Naive thymus-derived CD4-positive, alpha-beta T cell (primary cell): ENCODE measurements at regions of chr11 and their contacts with region 1.

Region 1: DNA sequence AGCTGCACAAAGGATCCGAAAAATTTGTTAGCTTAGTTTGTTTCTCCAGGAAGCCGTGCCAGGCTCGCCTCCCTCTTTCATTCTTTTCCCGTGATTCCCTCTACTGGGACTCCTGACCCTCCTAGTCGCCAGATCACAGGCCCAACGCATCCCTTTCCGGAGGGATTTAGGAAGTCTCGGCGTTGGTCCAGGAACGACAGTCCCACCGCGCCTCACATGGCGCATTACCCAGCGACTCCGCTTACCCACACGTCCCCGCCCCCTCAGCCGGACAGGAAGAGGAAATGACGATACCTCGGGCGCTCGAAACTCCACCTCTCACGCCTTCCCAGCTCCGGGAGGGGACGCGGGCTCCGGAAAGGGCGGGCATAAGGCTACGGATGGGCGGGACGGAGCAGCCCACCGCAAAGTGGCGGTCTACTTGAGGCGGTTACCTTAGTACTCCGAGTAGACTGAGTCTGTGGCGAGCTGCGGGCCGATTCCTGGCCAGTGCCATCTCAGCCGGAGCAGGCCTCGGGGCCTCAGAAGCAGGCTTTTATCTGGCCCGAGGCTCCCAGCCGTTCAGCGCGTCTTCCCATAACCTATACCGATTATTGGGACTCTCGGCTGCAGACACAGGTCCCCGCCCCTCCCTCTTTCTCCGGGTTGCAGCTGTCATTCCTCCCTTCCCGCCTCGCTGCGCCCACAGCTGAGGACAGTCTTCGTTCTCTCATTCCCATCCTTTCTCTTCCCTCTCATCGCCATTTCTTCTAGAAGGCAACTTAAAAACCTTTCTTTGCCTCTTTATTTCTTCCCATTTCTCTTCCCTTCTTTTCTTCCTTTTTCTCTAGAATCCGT is at the start of gene CCDC15:
- DNase-seq: peak; percentile 78 to 94 (median 92)
- ATAC-seq: peak; percentile 99
- H3K4me3 ChIP-seq: peak within 1 kb of the TSS; percentile 72
- H3K4me3 Mint-ChIP-seq: no peak within 1 kb of the TSS
- H3K27ac ChIP-seq: peak within 1 kb of the TSS; percentile 85
- H3K27ac Mint-ChIP-seq: no peak within 1 kb of the TSS
- H3K4me1 ChIP-seq: peaks cover 27 to 42% of the 10 kb centered on the region in 2 donors
- H3K4me1 Mint-ChIP-seq: peaks cover 0 to 7% (median 0%) of the 10 kb centered on the region in 7 donors
- H3K27me3 ChIP-seq: no peaks in the 10 kb centered on the region
- H3K27me3 Mint-ChIP-seq: no peaks in the 10 kb centered on the region
- total RNA-seq, gene CCDC15: 1.6 to 4.7 (median 2.7) TPM

Region 2: GRCh38 chr11:124622531-124623451 is 331.2 kb before region 1 on chr11 and contains the start of gene TBRG1:
- CTCF ChIA-PET with region 1: no interaction called
- POLR2A ChIA-PET with region 1: interaction called, 6 read pairs
- intact Hi-C with region 1: loop called (anchors 1 to 5 kb)
- DNase-seq: peak; percentile 58 to 87 (median 81)
- ATAC-seq: peak; percentile 96
- H3K4me3 ChIP-seq: peak within 1 kb of the TSS; percentile 75
- H3K4me3 Mint-ChIP-seq: peak within 1 kb of the TSS; percentile 89 to 100 (median 98)
- H3K27ac ChIP-seq: peak within 1 kb of the TSS; percentile 91
- H3K27ac Mint-ChIP-seq: peak within 1 kb of the TSS; percentile 91 to 100 (median 98)
- H3K4me1 ChIP-seq: peaks cover 7 to 12% of the 10 kb centered on the region in 2 donors
- H3K4me1 Mint-ChIP-seq: peaks cover 21 to 52% (median 46%) of the 10 kb centered on the region in 7 donors
- H3K27me3 ChIP-seq: no peaks in the 10 kb centered on the region
- H3K27me3 Mint-ChIP-seq: peaks cover 0 to 23% (median 7%) of the 10 kb centered on the region in 5 donors
- total RNA-seq, gene TBRG1: 35.5 to 78.6 (median 63.9) TPM

Region 3: GRCh38 chr11:124758317-124759203 is 195.4 kb before region 1 on chr11:
- CTCF ChIA-PET with region 1: no interaction called
- POLR2A ChIA-PET with region 1: interaction called, 3 read pairs
- intact Hi-C with region 1: loop called (anchors 2 to 5 kb)
- DNase-seq: peak in 8 of 9 donors; percentile 61 to 73 (median 66)
- ATAC-seq: peak; percentile 78
- H3K4me3 ChIP-seq: peak overlapping the region; percentile 27
- H3K4me3 Mint-ChIP-seq: peak overlapping the region; percentile 52 to 98 (median 76)
- H3K27ac ChIP-seq: no peak overlapping the region
- H3K27ac Mint-ChIP-seq: peak overlapping the region in 2 of 9 donors; percentile 38 to 41
- H3K4me1 ChIP-seq: peaks cover 8 to 31% of the 10 kb centered on the region in 2 donors
- H3K4me1 Mint-ChIP-seq: peaks cover 6 to 40% (median 24%) of the 10 kb centered on the region in 7 donors
- H3K27me3 ChIP-seq: peaks cover 7 to 16% of the 10 kb centered on the region in 2 donors
- H3K27me3 Mint-ChIP-seq: peaks cover 36 to 60% (median 53%) of the 10 kb centered on the region in 5 donors

Region 4: GRCh38 chr11:124859171-124859570 is 94.8 kb before region 1 on chr11:
- CTCF ChIA-PET with region 1: no interaction called
- POLR2A ChIA-PET with region 1: no interaction called
- intact Hi-C with region 1: no loop called
- DNase-seq: no peak
- ATAC-seq: no peak
- H3K4me3 ChIP-seq: no peak overlapping the region
- H3K4me3 Mint-ChIP-seq: no peak overlapping the region
- H3K27ac ChIP-seq: no peak overlapping the region
- H3K27ac Mint-ChIP-seq: no peak overlapping the region
- H3K4me1 ChIP-seq: peaks cover 0 to 4% of the 10 kb centered on the region in 2 donors
- H3K4me1 Mint-ChIP-seq: peaks cover 0 to 15% (median 12%) of the 10 kb centered on the region in 7 donors
- H3K27me3 ChIP-seq: peaks cover 0 to 15% of the 10 kb centered on the region in 2 donors
- H3K27me3 Mint-ChIP-seq: peaks cover 44 to 48% (median 46%) of the 10 kb centered on the region in 5 donors

Region 5: DNA sequence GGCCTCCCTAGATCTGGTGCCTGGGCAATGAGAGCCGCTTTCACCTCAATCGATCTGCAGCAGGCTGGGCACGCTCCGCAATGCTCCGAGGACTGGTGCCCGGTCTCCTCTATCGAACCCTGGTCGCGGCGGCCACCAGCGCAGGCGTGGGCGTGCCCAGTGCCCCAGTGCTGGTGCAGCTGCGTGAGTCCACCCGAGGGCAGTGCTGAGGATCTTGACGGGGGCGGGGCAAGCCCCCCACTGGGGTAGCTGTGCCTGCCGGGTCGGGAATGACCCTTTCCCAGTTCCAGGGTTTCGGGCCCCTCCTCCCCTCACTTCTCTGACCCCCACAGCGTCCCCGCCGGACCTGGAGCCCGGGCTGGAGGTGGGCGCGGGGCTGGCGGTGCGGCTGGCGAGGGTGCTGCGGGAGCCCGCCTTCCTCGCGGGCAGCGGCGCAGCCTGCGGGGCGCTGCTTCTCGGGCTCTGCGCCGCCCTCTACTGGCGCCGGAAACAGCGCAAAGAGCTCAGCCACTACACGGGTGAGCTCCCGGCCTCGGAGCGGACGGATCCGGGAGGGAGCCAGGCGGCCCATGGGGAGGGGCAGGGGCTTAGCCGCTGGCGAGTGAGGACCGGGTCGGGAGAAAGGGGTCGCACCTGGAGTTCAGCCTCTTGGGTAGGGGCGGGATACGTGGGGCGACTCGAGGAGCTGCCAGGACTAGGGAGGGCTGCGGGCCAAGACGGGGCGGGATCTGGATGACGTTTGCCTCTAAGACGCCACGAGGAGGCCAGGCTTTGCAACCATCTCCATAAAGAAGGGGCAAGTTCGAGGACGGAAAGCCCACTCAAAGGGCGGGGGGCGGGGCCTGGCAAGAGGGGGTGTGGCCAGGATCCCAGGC is 77.8 kb before region 1 on chr11:
- CTCF ChIA-PET with region 1: interaction called, 19 read pairs
- POLR2A ChIA-PET with region 1: interaction called, 21 read pairs
- intact Hi-C with region 1: loop called (anchors 1 kb)
- DNase-seq: peak; percentile 71 to 84 (median 81)
- ATAC-seq: peak; percentile 94
- H3K4me3 ChIP-seq: peak overlapping the region; percentile 98
- H3K4me3 Mint-ChIP-seq: peak overlapping the region; percentile 85 to 94 (median 90)
- H3K27ac ChIP-seq: peak overlapping the region; percentile 79
- H3K27ac Mint-ChIP-seq: peak overlapping the region; percentile 77 to 95 (median 92)
- H3K4me1 ChIP-seq: peaks cover 7 to 9% of the 10 kb centered on the region in 2 donors
- H3K4me1 Mint-ChIP-seq: peaks cover 11 to 34% (median 24%) of the 10 kb centered on the region in 7 donors
- H3K27me3 ChIP-seq: peaks cover 0 to 3% of the 10 kb centered on the region in 2 donors
- H3K27me3 Mint-ChIP-seq: peaks cover 18 to 49% (median 34%) of the 10 kb centered on the region in 5 donors

Region 6: GRCh38 chr11:124943254-124943616 is 10.7 kb before region 1 on chr11:
- CTCF ChIA-PET with region 1: interaction called, 4 read pairs
- POLR2A ChIA-PET with region 1: interaction called, 15 read pairs
- intact Hi-C with region 1: loop called in 1 of 2 experiments (anchors 1 kb)
- DNase-seq: no peak
- ATAC-seq: no peak
- H3K4me3 ChIP-seq: no peak overlapping the region
- H3K4me3 Mint-ChIP-seq: peak overlapping the region in 3 of 10 donors; percentile 3 to 59 (median 40)
- H3K27ac ChIP-seq: no peak overlapping the region
- H3K27ac Mint-ChIP-seq: peak overlapping the region in 7 of 9 donors; percentile 3 to 95 (median 59)
- H3K4me1 ChIP-seq: peaks cover 6 to 20% of the 10 kb centered on the region in 2 donors
- H3K4me1 Mint-ChIP-seq: peaks cover 4 to 36% (median 30%) of the 10 kb centered on the region in 7 donors
- H3K27me3 ChIP-seq: no peaks in the 10 kb centered on the region
- H3K27me3 Mint-ChIP-seq: no peaks in the 10 kb centered on the region

Region 7: DNA sequence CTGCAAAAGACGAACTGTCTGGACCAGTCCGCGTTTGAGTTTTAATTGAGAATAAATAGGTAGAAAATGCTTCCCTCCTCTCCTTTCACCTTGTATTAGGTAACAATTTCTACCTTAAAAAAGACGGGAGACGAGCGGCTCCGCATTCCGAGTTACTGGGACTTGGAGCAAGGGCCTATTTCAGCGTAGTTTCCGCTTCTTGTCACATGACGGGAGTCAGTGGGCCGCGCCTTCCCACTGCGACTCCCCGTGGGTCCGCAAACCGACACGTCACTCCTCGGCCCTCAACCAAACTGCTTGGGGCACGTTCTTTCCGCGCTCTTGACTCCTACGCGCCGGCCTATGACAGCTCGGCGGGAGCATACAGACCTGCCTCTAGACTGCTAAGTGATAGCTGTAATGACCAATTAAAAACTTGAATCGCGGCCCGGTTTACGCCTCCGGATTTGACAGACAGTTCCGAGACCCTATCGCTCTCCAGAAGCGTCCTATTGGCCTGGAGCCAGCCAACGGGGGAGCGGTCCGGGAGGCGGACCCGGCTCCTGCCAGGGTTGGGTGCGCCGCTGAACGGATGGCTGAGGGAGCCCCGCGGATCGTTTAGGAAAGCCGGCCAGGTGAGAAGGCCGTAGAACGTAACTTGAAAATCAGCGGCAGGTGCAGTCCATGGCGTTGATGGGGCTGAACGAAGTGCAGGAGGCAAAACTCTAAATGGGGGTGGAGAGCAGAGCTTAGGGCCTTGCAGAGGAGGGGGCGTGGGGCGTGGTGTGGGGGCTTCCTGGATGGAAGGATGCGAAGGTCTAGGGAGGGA is 638.5 kb after region 1 on chr11 and contains the start of gene STT3A:
- CTCF ChIA-PET with region 1: no interaction called
- POLR2A ChIA-PET with region 1: no interaction called
- intact Hi-C with region 1: loop called (anchors 1 to 5 kb)
- DNase-seq: peak; percentile 94 to 99 (median 99)
- ATAC-seq: peak; percentile 96
- H3K4me3 ChIP-seq: peak within 1 kb of the TSS; percentile 94
- H3K4me3 Mint-ChIP-seq: peak within 1 kb of the TSS; percentile 88 to 99 (median 96)
- H3K27ac ChIP-seq: peak within 1 kb of the TSS; percentile 95
- H3K27ac Mint-ChIP-seq: peak within 1 kb of the TSS; percentile 94 to 100 (median 99)
- H3K4me1 ChIP-seq: peaks cover 13% of the 10 kb centered on the region in 2 donors
- H3K4me1 Mint-ChIP-seq: peaks cover 30 to 62% (median 53%) of the 10 kb centered on the region in 7 donors
- H3K27me3 ChIP-seq: no peaks in the 10 kb centered on the region
- H3K27me3 Mint-ChIP-seq: no peaks in the 10 kb centered on the region
- total RNA-seq, gene STT3A: 39.6 to 153 (median 84.5) TPM

Region 8: DNA sequence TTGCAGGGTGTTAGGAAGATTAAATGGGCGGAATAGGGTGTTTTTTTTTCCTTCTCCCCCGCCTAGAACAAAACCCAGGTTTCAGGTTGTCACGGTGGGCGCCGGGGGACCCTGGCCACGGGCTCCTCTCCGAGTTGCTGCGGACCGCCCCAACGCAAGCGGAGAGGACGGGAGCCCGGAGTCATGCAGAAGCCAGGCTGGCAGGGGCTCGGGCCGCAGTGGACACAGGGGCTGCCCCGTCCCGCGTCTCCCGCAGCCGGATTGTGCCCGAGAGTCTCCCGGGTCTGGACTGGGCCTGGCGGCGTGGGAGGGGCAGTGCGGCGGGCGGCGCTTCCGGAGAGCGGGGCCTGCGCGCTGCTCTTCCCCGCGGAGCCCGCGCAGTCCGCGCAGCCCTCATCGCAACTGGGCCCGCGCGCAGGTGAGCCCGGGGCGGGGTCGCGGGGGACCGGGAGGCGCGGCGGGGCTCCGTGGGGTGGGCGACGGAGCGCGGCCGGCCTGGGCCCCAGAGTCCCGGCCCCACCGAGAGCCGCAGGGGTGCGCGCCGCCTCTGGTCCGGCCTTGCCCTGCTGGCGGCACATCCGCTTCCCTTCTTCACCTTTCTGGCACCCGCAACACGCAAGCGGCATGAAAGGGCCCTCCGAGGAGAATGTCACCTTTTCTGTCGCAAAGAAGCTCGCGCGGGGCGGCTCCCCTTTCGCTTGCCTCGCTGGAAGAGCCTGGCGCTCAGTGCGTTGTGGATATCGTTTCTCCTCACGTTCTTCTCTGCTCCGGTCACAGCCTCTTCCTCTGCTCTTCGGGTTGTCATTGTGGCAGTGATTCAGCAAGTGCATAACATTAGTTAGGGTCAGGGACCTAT is 1329.0 kb after region 1 on chr11 and contains the start of gene TIRAP:
- CTCF ChIA-PET with region 1: no interaction called
- POLR2A ChIA-PET with region 1: no interaction called
- intact Hi-C with region 1: loop called in 1 of 2 experiments (anchors 5 kb)
- DNase-seq: peak; percentile 55 to 77 (median 75)
- ATAC-seq: peak; percentile 79
- H3K4me3 ChIP-seq: peak within 1 kb of the TSS; percentile 77
- H3K4me3 Mint-ChIP-seq: peak within 1 kb of the TSS; percentile 88 to 100 (median 98)
- H3K27ac ChIP-seq: peak within 1 kb of the TSS; percentile 86
- H3K27ac Mint-ChIP-seq: peak within 1 kb of the TSS; percentile 93 to 99 (median 97)
- H3K4me1 ChIP-seq: peaks cover 16 to 28% of the 10 kb centered on the region in 2 donors
- H3K4me1 Mint-ChIP-seq: peaks cover 35 to 62% (median 55%) of the 10 kb centered on the region in 7 donors
- H3K27me3 ChIP-seq: no peaks in the 10 kb centered on the region
- H3K27me3 Mint-ChIP-seq: no peaks in the 10 kb centered on the region
- total RNA-seq, gene TIRAP: 12.9 to 21.5 (median 17.9) TPM